Motor neuron (in vitro differentiated cells): ENCODE measurements at regions of chr19 and their contacts with region 1.

Region 1: GRCh38 chr19:12983542-12984142 is 11.6 kb upstream of the NFIX start:
- ATAC-seq: peak; percentile 41 to 89 (median 52)
- H3K4me3 ChIP-seq: peak overlapping the region; percentile 13 to 25 (median 19)
- H3K27ac ChIP-seq: no peak overlapping the region
- H3K4me1 ChIP-seq: peaks cover 7 to 19% of the 10 kb centered on the region in 2 donors

Region 2: DNA sequence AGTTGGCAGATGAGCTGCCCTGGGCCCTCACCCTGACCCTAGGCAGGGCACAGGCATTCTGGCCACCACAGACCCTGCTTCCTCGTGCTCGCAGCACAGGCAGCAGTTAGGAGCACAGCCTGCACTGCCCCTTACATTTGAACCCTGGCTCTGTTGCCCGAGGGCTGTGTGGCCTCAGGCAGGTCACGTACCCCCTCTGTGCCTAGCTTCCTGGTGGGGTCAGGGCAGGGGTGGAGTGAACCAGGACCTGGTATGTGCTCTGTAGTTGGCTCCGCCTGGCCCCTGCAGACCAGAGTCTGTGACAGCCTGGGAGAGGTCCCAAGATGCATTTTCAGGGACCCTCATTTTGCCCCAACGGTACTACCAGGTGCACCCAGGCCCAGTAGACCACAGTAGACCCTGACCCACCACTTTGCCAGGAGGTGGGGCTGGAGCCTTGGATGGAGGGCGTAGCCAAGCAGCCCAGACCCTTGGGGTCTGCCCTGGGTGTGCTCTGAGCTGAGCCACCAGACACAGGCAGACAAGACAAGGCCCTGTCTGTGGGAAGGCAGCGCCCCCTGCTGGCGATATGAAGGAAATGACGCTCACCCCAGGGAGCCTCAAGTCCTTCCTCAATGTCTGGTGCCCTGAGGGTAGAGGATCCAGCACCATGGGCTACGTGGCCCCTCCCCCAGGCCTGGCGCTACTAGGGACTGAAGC is 109.9 kb after region 1 on chr19:
- in situ Hi-C with region 1: loop called (anchors 10 to 25 kb)
- ATAC-seq: peak; percentile 58 to 87 (median 74)
- H3K4me3 ChIP-seq: no peak overlapping the region
- H3K27ac ChIP-seq: no peak overlapping the region
- H3K4me1 ChIP-seq: peaks cover 22 to 56% of the 10 kb centered on the region in 2 donors

Region 3: DNA sequence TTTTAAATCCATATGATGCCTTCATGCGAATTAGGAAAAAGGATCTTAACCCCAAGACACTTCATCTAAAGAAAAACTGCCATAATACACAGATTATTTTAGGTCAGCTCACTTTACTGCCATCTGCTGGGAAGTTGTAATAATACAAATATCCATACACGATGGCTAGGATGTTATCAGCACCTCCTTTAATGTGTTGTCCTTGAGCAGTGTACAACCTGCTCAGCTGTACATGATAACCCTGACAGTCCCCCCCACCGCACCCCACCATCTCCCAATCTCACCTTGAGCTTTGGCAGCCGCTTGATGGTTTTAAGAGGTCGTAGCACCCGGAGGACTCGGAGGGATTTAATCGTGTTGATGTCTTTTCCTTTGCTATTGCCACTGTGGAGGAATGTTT is 278.8 kb after region 1 on chr19:
- in situ Hi-C with region 1: loop called in 4 of 9 experiments (anchors 10 to 25 kb)
- ATAC-seq: peak; percentile 15 to 69 (median 46)
- H3K4me3 ChIP-seq: no peak overlapping the region
- H3K27ac ChIP-seq: no peak overlapping the region
- H3K4me1 ChIP-seq: peaks cover 0 to 2% of the 10 kb centered on the region in 2 donors